ENCODE measurements at regions of chr7 and their contacts with region 1.

Region 1: GRCh38 chr7:13279854-13280435 is 592.5 kb downstream of the ARL4A start:
- DNase-seq: peak; percentile 5
- ATAC-seq: no peak
- H3K4me3 ChIP-seq: no peak overlapping the region
- H3K27ac ChIP-seq: no peak overlapping the region
- H3K4me1 ChIP-seq: no peaks in the 10 kb centered on the region
- H3K27me3 ChIP-seq: no peaks in the 10 kb centered on the region
- CTCF ChIP-seq: no peak
- EP300 ChIP-seq: no peak
- POLR2A ChIP-seq: no peak
- RAD21 ChIP-seq: no peak

Region 2: GRCh38 chr7:13742811-13743210 is 462.9 kb after region 1 on chr7:
- CTCF ChIA-PET with region 1: no interaction called
- POLR2A ChIA-PET with region 1: no interaction called
- in situ Hi-C with region 1: no loop called
- intact Hi-C with region 1: loop called (anchors 10 kb)
- DNase-seq: no peak
- ATAC-seq: no peak
- H3K4me3 ChIP-seq: no peak overlapping the region
- H3K27ac ChIP-seq: no peak overlapping the region
- H3K4me1 ChIP-seq: no peaks in the 10 kb centered on the region
- H3K27me3 ChIP-seq: no peaks in the 10 kb centered on the region
- CTCF ChIP-seq: 0 out of 2 replicates have a peak, but pooled peaks have one; percentile 4
- EP300 ChIP-seq: no peak
- POLR2A ChIP-seq: no peak
- RAD21 ChIP-seq: no peak

Region 3: DNA sequence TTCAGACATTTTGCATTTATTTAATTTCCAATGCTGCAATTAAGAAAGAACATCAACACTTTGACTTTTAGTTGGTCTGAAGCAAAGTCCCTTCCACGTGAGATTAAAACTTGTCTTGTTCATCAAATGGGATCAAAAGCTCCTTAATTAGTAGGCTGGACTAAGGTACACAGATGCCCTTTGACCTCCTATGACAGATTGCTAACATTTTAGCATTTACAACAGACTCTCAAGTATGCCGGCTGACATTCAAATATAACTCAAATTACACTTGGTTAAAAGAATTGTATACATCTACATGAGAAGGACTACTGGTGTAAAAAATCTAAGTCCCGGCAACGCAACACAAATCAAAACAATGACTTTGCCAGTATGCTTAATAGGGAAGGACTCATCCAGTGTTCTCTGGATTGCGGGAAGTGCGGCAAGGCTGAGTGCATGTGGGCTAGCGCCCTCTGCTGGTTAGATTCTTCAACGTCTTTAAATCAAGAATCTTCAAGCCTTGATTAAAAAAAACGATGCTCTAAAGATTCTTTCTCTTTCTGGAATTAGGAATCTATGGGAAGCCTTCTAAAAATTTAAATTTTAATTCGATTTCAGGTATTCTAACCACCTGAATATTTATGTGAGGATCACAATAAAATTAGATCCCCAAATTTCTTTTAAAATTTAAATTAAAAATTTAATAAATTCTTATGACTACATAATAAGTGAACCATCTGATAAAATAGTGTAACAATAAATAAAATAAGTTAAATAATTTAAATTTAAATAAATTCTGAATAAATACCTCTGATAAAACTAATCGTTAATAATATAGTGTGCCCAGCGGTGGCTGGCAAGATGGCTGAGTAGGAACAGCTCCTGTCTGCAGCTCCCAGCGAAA is 1177.9 kb after region 1 on chr7:
- CTCF ChIA-PET with region 1: interaction called, 8 read pairs
- POLR2A ChIA-PET with region 1: no interaction called
- in situ Hi-C with region 1: loop called (anchors 25 kb)
- intact Hi-C with region 1: no loop called
- DNase-seq: peak; percentile 26
- ATAC-seq: peak; percentile 53
- H3K4me3 ChIP-seq: no peak overlapping the region
- H3K27ac ChIP-seq: no peak overlapping the region
- H3K4me1 ChIP-seq: no peaks in the 10 kb centered on the region
- H3K27me3 ChIP-seq: no peaks in the 10 kb centered on the region
- CTCF ChIP-seq: peak; percentile 54
- EP300 ChIP-seq: no peak
- POLR2A ChIP-seq: no peak
- RAD21 ChIP-seq: no peak

Region 4: DNA sequence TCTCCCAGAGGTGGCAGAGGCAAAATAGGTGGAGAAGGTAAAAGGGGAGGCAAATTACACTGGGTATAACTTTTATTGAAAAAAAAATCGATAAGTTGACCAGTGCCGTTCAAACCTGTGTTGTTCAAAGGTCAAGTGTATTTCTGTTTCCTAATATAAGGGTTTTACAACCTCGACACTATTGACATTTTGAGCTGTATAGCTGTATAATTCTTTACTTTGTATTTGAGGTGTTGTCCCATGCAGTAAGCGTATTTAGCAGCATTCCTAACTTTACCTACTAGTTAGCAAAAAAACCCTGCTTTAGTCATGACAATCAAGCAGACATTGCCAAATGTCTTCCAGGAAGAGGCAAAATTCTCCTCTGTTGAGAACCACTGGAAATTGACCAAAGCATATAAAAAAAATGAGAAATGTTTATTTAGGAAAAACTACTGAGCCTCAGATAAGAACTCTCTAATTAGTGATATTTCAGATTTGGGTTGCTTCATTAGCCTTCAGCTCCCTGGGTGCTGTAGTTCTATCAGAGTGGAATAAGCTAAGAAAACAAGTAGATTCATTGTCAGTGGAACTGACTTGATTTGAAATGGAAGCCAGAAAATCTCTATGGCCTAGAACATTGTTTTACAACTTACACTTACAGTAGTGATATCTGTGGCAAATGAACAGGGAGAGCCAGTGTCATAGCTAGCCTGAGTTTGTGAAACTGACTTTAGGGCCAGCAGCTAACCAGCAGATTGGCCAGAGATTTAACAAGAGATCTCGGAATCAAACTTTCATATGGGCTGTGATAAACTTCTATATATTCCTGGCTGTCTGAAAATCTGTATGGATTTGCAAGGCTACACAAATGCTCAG is 1291.0 kb after region 1 on chr7:
- CTCF ChIA-PET with region 1: no interaction called
- POLR2A ChIA-PET with region 1: no interaction called
- in situ Hi-C with region 1: no loop called
- intact Hi-C with region 1: no loop called
- DNase-seq: no peak
- ATAC-seq: no peak
- H3K4me3 ChIP-seq: no peak overlapping the region
- H3K27ac ChIP-seq: no peak overlapping the region
- H3K4me1 ChIP-seq: no peaks in the 10 kb centered on the region
- H3K27me3 ChIP-seq: no peaks in the 10 kb centered on the region
- CTCF ChIP-seq: no peak
- EP300 ChIP-seq: no peak
- POLR2A ChIP-seq: no peak
- RAD21 ChIP-seq: no peak

Region 5: GRCh38 chr7:14691597-14692203 is 1411.8 kb after region 1 on chr7:
- CTCF ChIA-PET with region 1: interaction called, 9 read pairs
- POLR2A ChIA-PET with region 1: no interaction called
- in situ Hi-C with region 1: loop called (anchors 10 kb)
- intact Hi-C with region 1: loop called (anchors 1 kb)
- DNase-seq: peak; percentile 1
- ATAC-seq: 0 out of 3 replicates have a peak, but pooled peaks have one; percentile 33
- H3K4me3 ChIP-seq: no peak overlapping the region
- H3K27ac ChIP-seq: no peak overlapping the region
- H3K4me1 ChIP-seq: no peaks in the 10 kb centered on the region
- H3K27me3 ChIP-seq: no peaks in the 10 kb centered on the region
- CTCF ChIP-seq: peak; percentile 60
- EP300 ChIP-seq: no peak
- POLR2A ChIP-seq: no peak
- RAD21 ChIP-seq: no peak

Region 6: GRCh38 chr7:15015545-15016326 is 1735.8 kb after region 1 on chr7:
- CTCF ChIA-PET with region 1: no interaction called
- POLR2A ChIA-PET with region 1: no interaction called
- in situ Hi-C with region 1: loop called (anchors 25 kb)
- intact Hi-C with region 1: loop called (anchors 5 kb)
- DNase-seq: peak; percentile 75
- ATAC-seq: peak; percentile 98
- H3K4me3 ChIP-seq: no peak overlapping the region
- H3K27ac ChIP-seq: no peak overlapping the region
- H3K4me1 ChIP-seq: no peaks in the 10 kb centered on the region
- H3K27me3 ChIP-seq: no peaks in the 10 kb centered on the region
- CTCF ChIP-seq: peak; percentile 63
- EP300 ChIP-seq: no peak
- POLR2A ChIP-seq: no peak
- RAD21 ChIP-seq: no peak